ENCODE measurements at regions of chr5 and their contacts with region 1.

Region 1: GRCh38 chr5:146565764-146566367 is 49.9 kb upstream of the GPR151 start:
- DNase-seq: peak; percentile 35
- H3K4me3 Mint-ChIP-seq: no peak overlapping the region
- H3K27ac Mint-ChIP-seq: no peak overlapping the region
- H3K4me1 Mint-ChIP-seq: peaks cover 5% of the 10 kb centered on the region
- H3K27me3 Mint-ChIP-seq: peaks cover 9% of the 10 kb centered on the region

Region 2: DNA sequence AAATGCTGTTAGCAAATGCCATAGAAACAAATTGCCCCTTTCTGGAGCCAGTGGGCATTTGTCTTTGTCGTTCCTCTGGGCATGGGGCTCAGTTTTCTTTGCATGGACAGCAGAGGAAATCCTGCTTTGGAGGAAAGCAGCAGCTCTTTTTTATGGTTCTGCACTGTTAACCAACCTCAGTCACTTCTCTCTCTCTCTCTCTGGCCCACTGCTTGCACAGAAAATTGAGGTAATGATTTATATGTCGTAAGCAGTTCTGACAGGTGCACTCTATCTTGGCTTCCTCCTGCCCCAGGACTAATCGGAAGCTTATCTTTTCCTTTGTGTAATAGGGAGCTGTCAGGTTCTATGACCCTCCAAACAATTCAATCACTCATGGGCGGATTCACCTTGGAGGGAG is 109.8 kb after region 1 on chr5:
- intact Hi-C with region 1: no loop called
- DNase-seq: no peak
- H3K4me3 Mint-ChIP-seq: no peak overlapping the region
- H3K27ac Mint-ChIP-seq: no peak overlapping the region
- H3K4me1 Mint-ChIP-seq: no peaks in the 10 kb centered on the region
- H3K27me3 Mint-ChIP-seq: no peaks in the 10 kb centered on the region

Region 3: GRCh38 chr5:146965761-146966659 is 400.1 kb after region 1 on chr5:
- intact Hi-C with region 1: loop called (anchors 1 kb)
- DNase-seq: peak; percentile 25
- H3K4me3 Mint-ChIP-seq: no peak overlapping the region
- H3K27ac Mint-ChIP-seq: no peak overlapping the region
- H3K4me1 Mint-ChIP-seq: peaks cover 1% of the 10 kb centered on the region
- H3K27me3 Mint-ChIP-seq: peaks cover 4% of the 10 kb centered on the region

Measured in activated T-helper 2 cell treated with anti-CD3 and anti-CD28 coated beads, Interferon-gamma antibody, Interleukin-2, Interleukin-4, amounts not matched to agents 10 μg/mL and 5 μg/mL and 100 μg/mL, durations not matched to agents 14 hours and 24 hours and 36 hours (primary cell).